Spleen (tissue), 13 donors: ENCODE measurements at regions of chr12 and their contacts with region 1.

Region 1: DNA sequence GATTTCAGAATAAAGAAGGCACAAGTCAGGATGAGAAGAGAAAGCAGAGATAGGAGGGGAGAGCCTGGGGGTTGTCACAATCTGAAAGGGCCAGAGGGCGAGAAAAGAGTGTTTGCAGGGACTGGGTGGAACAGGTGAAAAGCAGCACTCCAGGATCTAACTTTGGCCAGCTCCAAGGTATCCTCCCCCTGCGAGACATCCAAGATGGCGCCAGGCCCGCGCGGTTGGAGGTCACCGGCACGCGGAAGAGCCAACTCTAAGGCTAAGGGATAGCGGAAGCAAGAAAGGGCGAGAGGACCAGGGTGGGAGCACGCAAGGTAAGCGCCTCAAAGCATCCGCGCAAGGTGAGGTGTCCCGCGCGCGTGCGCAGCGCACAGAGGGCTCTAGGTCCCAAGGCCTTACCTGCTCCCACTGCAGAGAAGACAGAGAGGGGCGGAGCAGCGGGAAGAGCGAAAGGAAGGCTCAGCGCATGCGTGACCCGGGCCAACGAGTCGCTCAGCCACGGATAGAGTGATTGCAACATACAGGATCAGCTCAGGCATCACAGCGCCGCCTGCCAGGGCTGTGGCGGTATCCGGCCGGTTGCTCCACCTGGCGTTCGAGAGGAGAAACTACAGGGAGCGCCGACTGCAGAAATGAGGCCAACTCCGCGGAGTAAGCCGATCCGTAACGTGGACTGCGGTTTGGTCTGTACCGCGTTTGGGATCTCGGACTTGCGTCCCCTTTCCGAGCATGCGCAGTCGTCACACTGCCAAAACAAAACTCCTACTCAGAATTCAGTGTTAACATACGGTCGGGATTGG is at the start of gene ATP5MC2:
- DNase-seq: peak; percentile 99
- H3K4me3 ChIP-seq: peak within 1 kb of the TSS; percentile 90 to 96 (median 94)
- H3K27ac ChIP-seq: peak within 1 kb of the TSS; percentile 78 to 94 (median 90)
- H3K4me1 ChIP-seq: peaks cover 14 to 64% (median 46%) of the 10 kb centered on the region in 6 donors
- H3K27me3 ChIP-seq: peaks cover 0 to 19% (median 0%) of the 10 kb centered on the region in 7 donors
- CTCF ChIP-seq: peak; percentile 97 to 100 (median 99)
- POLR2A ChIP-seq: no peak
- total RNA-seq, gene ATP5MC2: 231 to 323 (median 282) TPM

Region 2: DNA sequence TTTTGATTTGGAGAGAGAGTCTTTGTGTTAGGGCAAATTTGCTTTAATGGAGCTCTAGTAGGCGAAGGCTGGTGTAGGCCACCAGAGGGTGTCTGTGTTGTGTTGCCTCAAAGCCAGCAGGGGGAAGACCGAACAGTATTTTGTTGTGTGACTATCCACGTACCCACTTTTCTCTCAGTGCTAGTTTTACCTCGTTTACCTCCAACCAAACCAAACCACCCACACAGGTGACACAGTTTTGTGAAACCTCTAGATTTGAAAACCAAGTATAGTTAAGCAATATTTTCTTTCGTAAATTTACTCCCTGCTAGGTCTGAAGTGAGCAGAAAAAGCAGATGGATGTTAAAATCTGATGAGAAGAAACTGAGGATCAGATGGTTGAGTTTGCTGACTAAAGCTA is 132.3 kb before region 1 on chr12:
- intact Hi-C with region 1: loop called (anchors 2 kb)
- DNase-seq: no peak
- H3K4me3 ChIP-seq: no peak overlapping the region
- H3K27ac ChIP-seq: peak overlapping the region in 6 of 8 donors; percentile 5 to 55 (median 38)
- H3K4me1 ChIP-seq: peaks cover 0 to 29% (median 11%) of the 10 kb centered on the region in 6 donors
- H3K27me3 ChIP-seq: no peaks in the 10 kb centered on the region
- CTCF ChIP-seq: peak; percentile 46 to 91 (median 70)
- POLR2A ChIP-seq: no peak